Transverse colon (tissue), 4 donors: ENCODE measurements at regions of chr6 and their contacts with region 1.

Region 1: GRCh38 chr6:27177485-27178406 is 69.8 kb upstream of the PRSS16 start:
- DNase-seq: peak; percentile 88
- H3K4me3 ChIP-seq: peak overlapping the region; percentile 80 to 96 (median 88)
- H3K27ac ChIP-seq: peak overlapping the region; percentile 91 to 96 (median 92)
- H3K4me1 ChIP-seq: peaks cover 0 to 17% (median 3%) of the 10 kb centered on the region in 4 donors
- H3K27me3 ChIP-seq: no peaks in the 10 kb centered on the region
- CTCF ChIP-seq: peak; percentile 39 to 72 (median 52)
- EP300 ChIP-seq: no peak
- POLR2A ChIP-seq: peak; percentile 59

Region 2: DNA sequence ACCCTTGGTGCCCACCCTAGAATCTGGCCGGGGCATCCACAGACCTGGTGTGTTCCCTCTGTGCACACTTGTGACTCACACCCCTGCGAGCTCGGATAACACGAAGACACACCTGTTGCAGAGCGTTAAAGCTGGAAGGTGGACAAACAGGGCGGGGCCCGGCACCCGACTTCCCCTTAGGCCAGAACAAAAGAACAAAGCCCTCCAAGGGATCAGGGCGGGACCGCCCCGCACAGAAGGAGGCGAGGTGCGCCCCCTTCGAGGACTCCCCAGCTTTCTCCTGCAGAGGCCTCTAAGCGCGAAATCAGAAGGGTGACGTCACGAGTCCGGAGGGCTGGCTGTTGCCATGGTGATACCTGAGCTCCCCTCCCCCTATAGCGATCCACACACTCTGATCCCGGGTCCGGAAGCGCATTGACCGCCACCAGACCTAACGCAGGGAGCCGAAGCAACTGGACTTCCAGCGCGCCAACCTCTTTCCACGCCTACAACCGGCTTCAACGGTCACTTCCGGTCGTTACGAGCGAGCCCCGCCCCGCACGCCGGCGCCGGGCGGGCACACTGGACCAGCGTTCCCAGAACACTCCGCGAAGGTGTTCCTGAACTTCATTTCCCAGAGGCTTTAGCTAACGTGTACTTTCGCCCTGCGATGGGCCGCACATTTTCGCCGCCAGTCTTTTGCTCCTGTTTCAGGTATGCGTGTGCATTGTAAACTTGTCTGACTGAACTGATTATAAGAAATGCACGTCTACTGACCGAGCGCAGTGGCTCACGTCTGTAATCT is 295.1 kb after region 1 on chr6 and contains the start of gene ZNF184:
- in situ Hi-C with region 1: loop called in 1 of 4 experiments (anchors 10 kb)
- intact Hi-C with region 1: no loop called
- DNase-seq: peak; percentile 97
- H3K4me3 ChIP-seq: peak within 1 kb of the TSS; percentile 45 to 81 (median 60)
- H3K27ac ChIP-seq: peak within 1 kb of the TSS; percentile 90 to 96 (median 92)
- H3K4me1 ChIP-seq: peaks cover 3 to 27% (median 15%) of the 10 kb centered on the region in 4 donors
- H3K27me3 ChIP-seq: no peaks in the 10 kb centered on the region
- CTCF ChIP-seq: peak in 2 of 5 experiments; percentile 44 to 52
- EP300 ChIP-seq: no peak
- POLR2A ChIP-seq: peak; percentile 80
- total RNA-seq, gene ZNF184: 2.8 to 9.7 (median 6.9) TPM

Region 3: DNA sequence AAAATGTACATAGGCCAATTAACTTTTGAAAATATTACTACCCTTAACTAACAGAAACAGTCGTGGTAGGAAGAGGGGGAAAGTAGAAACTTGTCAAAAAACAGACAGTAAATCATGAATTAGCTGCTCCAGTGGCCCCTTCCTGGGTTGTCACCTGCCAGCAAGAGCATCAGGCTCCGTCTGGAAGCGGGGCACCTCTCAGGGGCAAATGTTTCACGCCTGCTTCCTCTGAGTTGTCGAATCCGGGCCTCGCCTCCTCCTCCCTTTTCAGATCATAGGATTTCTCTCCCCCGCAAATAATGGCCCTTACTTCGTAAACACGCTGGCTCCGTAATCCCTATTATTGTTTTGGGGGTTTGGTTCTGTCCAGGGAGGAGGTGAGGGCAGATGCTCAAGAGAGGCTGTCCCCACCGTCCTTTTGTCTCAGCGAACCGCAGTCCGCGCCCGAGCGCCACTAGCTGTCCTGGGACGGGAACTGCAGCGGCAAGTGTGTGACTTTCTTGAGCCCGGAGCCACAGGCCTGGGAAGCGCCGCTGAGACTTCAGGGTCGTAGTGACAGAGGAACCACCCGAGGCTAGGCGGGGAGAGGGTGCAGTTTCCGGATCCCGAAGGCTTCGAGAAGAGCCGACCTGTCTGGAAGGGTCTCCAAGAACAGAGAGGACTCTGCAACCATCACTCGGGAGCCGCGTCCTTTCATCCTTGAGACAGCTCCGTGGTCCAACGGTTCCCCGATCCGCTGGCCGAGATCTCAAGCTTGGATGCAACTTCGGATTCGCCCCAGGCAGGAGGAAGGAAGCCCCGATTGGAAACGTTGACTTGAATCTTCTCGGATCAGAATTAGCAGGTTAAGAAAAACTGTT is 509.6 kb after region 1 on chr6:
- in situ Hi-C with region 1: loop called in 1 of 4 experiments (anchors 10 kb)
- intact Hi-C with region 1: no loop called
- DNase-seq: peak; percentile 83
- H3K4me3 ChIP-seq: peak overlapping the region; percentile 22 to 55 (median 42)
- H3K27ac ChIP-seq: peak overlapping the region; percentile 56 to 64 (median 61)
- H3K4me1 ChIP-seq: peaks cover 0 to 4% (median 2%) of the 10 kb centered on the region in 4 donors
- H3K27me3 ChIP-seq: peaks cover 17% of the 10 kb centered on the region
- CTCF ChIP-seq: peak; percentile 56 to 67 (median 59)
- EP300 ChIP-seq: no peak
- POLR2A ChIP-seq: no peak